ENCODE measurements at regions of chr1 and their contacts with region 1.

Region 1: DNA sequence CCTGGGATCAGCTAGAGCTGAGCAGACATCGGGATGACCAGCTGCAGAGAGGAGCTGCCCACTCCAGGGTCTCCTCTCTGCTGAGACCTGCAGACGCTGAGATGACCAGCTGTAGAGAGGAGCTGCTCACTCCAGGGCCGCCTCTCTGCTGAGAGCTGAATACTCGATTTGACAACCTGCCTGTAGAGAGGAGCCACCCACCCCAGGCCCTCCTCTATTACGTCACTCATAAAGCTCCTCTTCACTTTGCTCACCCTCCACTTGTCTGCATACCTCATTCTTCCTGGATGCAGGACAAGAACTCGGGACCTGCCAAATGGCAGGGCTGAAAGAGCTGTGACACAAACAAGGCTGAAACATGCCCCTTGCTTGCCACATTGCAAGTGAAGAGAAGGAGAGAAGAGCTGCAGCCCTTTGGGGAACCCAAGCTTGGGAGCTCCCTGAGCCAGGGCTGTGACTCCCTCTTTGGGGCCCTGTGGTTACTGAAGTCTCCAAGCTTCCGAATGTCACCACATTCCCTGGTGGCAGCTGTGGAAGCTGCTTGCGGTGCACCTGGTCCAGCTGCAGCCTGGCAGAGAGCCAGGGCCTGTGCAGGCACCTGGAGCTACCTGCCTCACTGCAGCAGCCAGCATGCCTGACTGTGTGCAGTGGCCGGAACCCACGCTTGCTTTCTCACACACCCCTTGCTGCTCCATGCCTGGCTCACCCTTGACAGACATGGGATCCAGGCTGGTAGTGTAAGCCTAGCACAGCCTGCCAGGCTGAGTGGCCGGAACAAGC is 59.6 kb downstream of the CC2D1B start:
- DNase-seq: no peak
- ATAC-seq: no peak
- H3K4me3 ChIP-seq: no peak overlapping the region
- H3K27ac ChIP-seq: no peak overlapping the region
- H3K4me1 ChIP-seq: no peaks in the 10 kb centered on the region
- CTCF ChIP-seq: no peak
- EP300 ChIP-seq: no peak
- POLR2A ChIP-seq: no peak
- RAD21 ChIP-seq: no peak

Region 2: DNA sequence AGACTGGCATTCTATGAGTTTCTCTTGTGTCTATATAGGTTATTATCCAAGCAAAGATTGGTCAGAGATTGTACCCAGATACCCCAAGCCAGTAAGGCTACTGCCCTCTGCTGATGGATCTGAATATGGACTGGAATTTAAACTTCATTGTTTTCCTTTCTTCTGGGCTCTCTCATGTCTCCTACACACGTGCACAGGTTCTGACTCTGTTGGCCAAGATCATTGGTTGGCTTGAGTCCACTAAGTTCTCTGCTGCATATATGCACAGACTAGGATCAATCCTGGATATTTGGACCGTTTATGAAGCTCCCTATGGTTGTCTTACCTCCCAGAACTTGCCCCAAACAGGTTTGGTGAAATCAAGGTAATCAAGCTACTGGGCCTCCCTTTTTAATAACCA is 10.1 kb before region 1 on chr1:
- CTCF ChIA-PET with region 1: interaction called, 10 read pairs
- POLR2A ChIA-PET with region 1: no interaction called
- DNase-seq: peak; percentile 36 to 46
- ATAC-seq: peak; percentile 71 to 86; a peak in 5 of 6 replicates
- H3K4me3 ChIP-seq: no peak overlapping the region
- H3K27ac ChIP-seq: no peak overlapping the region
- H3K4me1 ChIP-seq: no peaks in the 10 kb centered on the region
- CTCF ChIP-seq: peak; percentile 63
- EP300 ChIP-seq: no peak
- POLR2A ChIP-seq: no peak
- RAD21 ChIP-seq: peak; percentile 59 to 72

Region 3: DNA sequence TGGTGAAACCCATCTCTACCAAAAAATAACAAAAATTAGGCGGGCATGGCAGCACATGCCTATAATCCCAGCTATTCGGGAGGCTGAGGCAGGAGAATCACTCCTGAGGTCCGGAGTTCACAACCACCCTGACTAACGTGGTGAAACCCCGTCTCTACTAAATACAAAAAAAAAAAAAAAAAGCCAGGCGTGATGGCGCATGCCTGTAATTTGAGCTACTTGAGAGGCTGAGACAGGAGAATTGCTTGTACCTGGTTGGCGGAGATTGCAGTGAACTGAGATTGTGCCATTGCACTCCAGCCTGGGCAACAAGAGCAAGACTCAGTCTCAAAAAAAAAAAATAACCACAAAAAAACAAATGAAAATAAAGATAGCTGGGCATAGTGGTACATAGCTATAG is 17.3 kb after region 1 on chr1:
- CTCF ChIA-PET with region 1: no interaction called
- POLR2A ChIA-PET with region 1: no interaction called
- DNase-seq: no peak
- ATAC-seq: no peak
- H3K4me3 ChIP-seq: no peak overlapping the region
- H3K27ac ChIP-seq: no peak overlapping the region
- H3K4me1 ChIP-seq: peaks cover 8% of the 10 kb centered on the region; the same call in 2 of the 3 replicates
- CTCF ChIP-seq: no peak
- EP300 ChIP-seq: no peak
- POLR2A ChIP-seq: no peak
- RAD21 ChIP-seq: no peak